Breast epithelium (tissue), 4 donors: ENCODE measurements at regions of chr13 and their contacts with region 1.

Region 1: GRCh38 chr13:109026266-109026665 is 396.9 kb downstream of the MYO16 start:
- DNase-seq: no peak
- H3K4me3 ChIP-seq: no peak overlapping the region
- H3K27ac ChIP-seq: no peak overlapping the region
- H3K4me1 ChIP-seq: no peaks in the 10 kb centered on the region
- H3K27me3 ChIP-seq: no peaks in the 10 kb centered on the region
- CTCF ChIP-seq: no peak
- POLR2A ChIP-seq: no peak

Region 2: GRCh38 chr13:108878732-108879131 is 147.5 kb before region 1 on chr13:
- intact Hi-C with region 1: no loop called
- DNase-seq: no peak
- H3K4me3 ChIP-seq: no peak overlapping the region
- H3K27ac ChIP-seq: no peak overlapping the region
- H3K4me1 ChIP-seq: no peaks in the 10 kb centered on the region
- H3K27me3 ChIP-seq: no peaks in the 10 kb centered on the region
- CTCF ChIP-seq: no peak
- POLR2A ChIP-seq: no peak

Region 3: GRCh38 chr13:109712124-109712727 is 686.0 kb after region 1 on chr13:
- intact Hi-C with region 1: loop called (anchors 5 kb)
- DNase-seq: no peak
- H3K4me3 ChIP-seq: no peak overlapping the region
- H3K27ac ChIP-seq: no peak overlapping the region
- H3K4me1 ChIP-seq: no peaks in the 10 kb centered on the region
- H3K27me3 ChIP-seq: no peaks in the 10 kb centered on the region
- CTCF ChIP-seq: no peak
- POLR2A ChIP-seq: no peak

Region 4: GRCh38 chr13:109938255-109938936 is 912.1 kb after region 1 on chr13:
- intact Hi-C with region 1: no loop called
- DNase-seq: no peak
- H3K4me3 ChIP-seq: no peak overlapping the region
- H3K27ac ChIP-seq: peak overlapping the region in 1 of 2 donors; percentile 10
- H3K4me1 ChIP-seq: no peaks in the 10 kb centered on the region
- H3K27me3 ChIP-seq: no peaks in the 10 kb centered on the region
- CTCF ChIP-seq: no peak
- POLR2A ChIP-seq: no peak